ENCODE measurements at regions of chr21 and their contacts with region 1.

Region 1: GRCh38 chr21:34745557-34746255 is 76.9 kb downstream of the CLIC6 start:
- DNase-seq: peak; percentile 16 to 71 (median 44)
- ATAC-seq: peak; percentile 80
- H3K4me3 ChIP-seq: peak overlapping the region in 1 of 2 experiments; percentile 13
- H3K4me3 Mint-ChIP-seq: peak overlapping the region; percentile 71
- H3K27ac ChIP-seq: no peak overlapping the region
- H3K27ac Mint-ChIP-seq: no peak overlapping the region
- H3K4me1 ChIP-seq: peaks cover 4% of the 10 kb centered on the region
- H3K4me1 Mint-ChIP-seq: peaks cover 4% of the 10 kb centered on the region
- H3K27me3 ChIP-seq: no peaks in the 10 kb centered on the region
- H3K27me3 Mint-ChIP-seq: peaks cover 4% of the 10 kb centered on the region
- CTCF ChIP-seq: peak; percentile 89

Region 2: GRCh38 chr21:34762761-34763160 is 17.1 kb after region 1 on chr21:
- CTCF ChIA-PET with region 1: interaction called, 10 read pairs
- POLR2A ChIA-PET with region 1: interaction called, 3 read pairs
- intact Hi-C with region 1: no loop called
- DNase-seq: no peak
- ATAC-seq: no peak
- H3K4me3 ChIP-seq: no peak overlapping the region
- H3K4me3 Mint-ChIP-seq: no peak overlapping the region
- H3K27ac ChIP-seq: no peak overlapping the region
- H3K27ac Mint-ChIP-seq: no peak overlapping the region
- H3K4me1 ChIP-seq: no peaks in the 10 kb centered on the region
- H3K4me1 Mint-ChIP-seq: no peaks in the 10 kb centered on the region
- H3K27me3 ChIP-seq: no peaks in the 10 kb centered on the region
- H3K27me3 Mint-ChIP-seq: no peaks in the 10 kb centered on the region
- CTCF ChIP-seq: no peak

Region 3: GRCh38 chr21:35400233-35400957 is 654.7 kb after region 1 on chr21:
- CTCF ChIA-PET with region 1: interaction called, 42 read pairs
- POLR2A ChIA-PET with region 1: no interaction called
- intact Hi-C with region 1: loop called in 1 of 2 experiments (anchors 1 kb)
- DNase-seq: peak in 8 of 9 experiments; percentile 2 to 81 (median 34)
- ATAC-seq: peak; percentile 89
- H3K4me3 ChIP-seq: no peak overlapping the region
- H3K4me3 Mint-ChIP-seq: no peak overlapping the region
- H3K27ac ChIP-seq: no peak overlapping the region
- H3K27ac Mint-ChIP-seq: no peak overlapping the region
- H3K4me1 ChIP-seq: no peaks in the 10 kb centered on the region
- H3K4me1 Mint-ChIP-seq: no peaks in the 10 kb centered on the region
- H3K27me3 ChIP-seq: no peaks in the 10 kb centered on the region
- H3K27me3 Mint-ChIP-seq: no peaks in the 10 kb centered on the region
- CTCF ChIP-seq: peak; percentile 67

Region 4: GRCh38 chr21:35616090-35616489 is 870.4 kb after region 1 on chr21:
- CTCF ChIA-PET with region 1: interaction called, 5 read pairs
- POLR2A ChIA-PET with region 1: no interaction called
- intact Hi-C with region 1: loop called (anchors 2 to 10 kb)
- DNase-seq: peak in 2 of 9 experiments; percentile 11 to 24
- ATAC-seq: no peak
- H3K4me3 ChIP-seq: no peak overlapping the region
- H3K4me3 Mint-ChIP-seq: no peak overlapping the region
- H3K27ac ChIP-seq: no peak overlapping the region
- H3K27ac Mint-ChIP-seq: no peak overlapping the region
- H3K4me1 ChIP-seq: no peaks in the 10 kb centered on the region
- H3K4me1 Mint-ChIP-seq: peaks cover 2% of the 10 kb centered on the region
- H3K27me3 ChIP-seq: no peaks in the 10 kb centered on the region
- H3K27me3 Mint-ChIP-seq: no peaks in the 10 kb centered on the region
- CTCF ChIP-seq: peak; percentile 28

Region 5: DNA sequence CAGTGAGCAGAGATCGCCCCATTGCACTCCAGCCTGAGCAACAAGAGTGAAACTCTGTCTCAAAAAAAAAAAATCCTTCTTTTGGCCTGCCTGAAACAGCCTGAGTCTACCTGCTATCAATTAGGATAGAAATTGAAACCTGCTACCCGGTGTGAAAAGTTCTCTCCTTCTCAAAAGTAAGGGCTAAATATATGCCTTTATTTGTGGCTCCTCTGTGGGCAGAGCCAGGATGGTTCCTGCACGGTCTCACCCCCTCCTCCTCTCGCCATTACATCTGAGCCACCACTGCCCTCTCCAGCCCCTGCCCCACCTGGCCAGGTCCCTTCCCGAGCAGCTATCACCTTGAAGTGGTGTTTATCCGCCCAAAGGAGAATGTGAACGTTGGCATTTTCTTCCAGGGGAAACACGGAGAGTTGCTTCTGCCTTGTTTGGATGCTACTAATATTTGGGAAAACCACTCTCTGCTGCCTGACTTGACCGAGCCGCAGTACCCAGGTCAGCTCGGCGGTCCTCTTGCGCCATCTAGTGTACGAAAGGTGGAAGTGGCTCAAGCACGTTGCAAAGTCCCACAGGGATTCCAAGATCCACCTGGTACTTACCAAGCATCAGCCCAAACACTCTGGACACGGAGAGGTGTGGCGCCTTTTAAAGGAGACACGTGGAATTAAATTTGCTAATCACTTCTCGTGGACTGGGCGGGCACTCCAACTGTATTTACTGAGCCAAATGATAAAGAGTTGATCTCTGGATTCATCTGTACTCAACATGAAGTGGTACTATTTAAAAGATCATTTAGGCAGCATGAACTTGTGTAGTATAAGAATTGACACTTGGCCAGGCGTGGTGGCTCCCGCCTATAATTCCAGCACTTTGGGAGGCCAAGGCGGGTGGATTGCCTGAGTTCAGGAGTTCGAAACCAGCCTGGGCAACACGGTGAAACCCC is 1282.7 kb after region 1 on chr21:
- CTCF ChIA-PET with region 1: interaction called, 27 read pairs
- POLR2A ChIA-PET with region 1: no interaction called
- intact Hi-C with region 1: loop called (anchors 1 kb)
- DNase-seq: peak; percentile 23 to 82 (median 66)
- ATAC-seq: peak; percentile 84
- H3K4me3 ChIP-seq: no peak overlapping the region
- H3K4me3 Mint-ChIP-seq: no peak overlapping the region
- H3K27ac ChIP-seq: no peak overlapping the region
- H3K27ac Mint-ChIP-seq: no peak overlapping the region
- H3K4me1 ChIP-seq: peaks cover 4% of the 10 kb centered on the region
- H3K4me1 Mint-ChIP-seq: peaks cover 2% of the 10 kb centered on the region
- H3K27me3 ChIP-seq: no peaks in the 10 kb centered on the region
- H3K27me3 Mint-ChIP-seq: no peaks in the 10 kb centered on the region
- CTCF ChIP-seq: peak; percentile 97